B cell (primary cell): ENCODE measurements at regions of chr4 and their contacts with region 1.

Region 1: GRCh38 chr4:73069338-73070073 is at the start of gene COX18:
- DNase-seq: peak; percentile 99
- ATAC-seq: peak; percentile 80
- H3K4me3 ChIP-seq: peak within 1 kb of the TSS; percentile 72 to 90 (median 78)
- H3K4me3 Mint-ChIP-seq: peak within 1 kb of the TSS; percentile 96
- H3K27ac ChIP-seq: peak within 1 kb of the TSS; percentile 98
- H3K27ac Mint-ChIP-seq: peak within 1 kb of the TSS; percentile 97
- H3K4me1 ChIP-seq: peaks cover 17 to 26% of the 10 kb centered on the region in 2 donors
- H3K4me1 Mint-ChIP-seq: peaks cover 30% of the 10 kb centered on the region
- H3K27me3 ChIP-seq: no peaks in the 10 kb centered on the region
- H3K27me3 Mint-ChIP-seq: no peaks in the 10 kb centered on the region
- CTCF ChIP-seq: no peak
- total RNA-seq, gene COX18: 12.7 and 14.4 TPM in 2 replicates

Region 2: GRCh38 chr4:72326692-72327632 is 742.5 kb before region 1 on chr4:
- CTCF ChIA-PET with region 1: no interaction called
- POLR2A ChIA-PET with region 1: no interaction called
- intact Hi-C with region 1: no loop called
- DNase-seq: peak; percentile 10
- ATAC-seq: no peak
- H3K4me3 ChIP-seq: no peak overlapping the region
- H3K4me3 Mint-ChIP-seq: no peak overlapping the region
- H3K27ac ChIP-seq: no peak overlapping the region
- H3K27ac Mint-ChIP-seq: no peak overlapping the region
- H3K4me1 ChIP-seq: no peaks in the 10 kb centered on the region
- H3K4me1 Mint-ChIP-seq: no peaks in the 10 kb centered on the region
- H3K27me3 ChIP-seq: no peaks in the 10 kb centered on the region
- H3K27me3 Mint-ChIP-seq: peaks cover 4% of the 10 kb centered on the region
- CTCF ChIP-seq: peak; percentile 65

Region 3: DNA sequence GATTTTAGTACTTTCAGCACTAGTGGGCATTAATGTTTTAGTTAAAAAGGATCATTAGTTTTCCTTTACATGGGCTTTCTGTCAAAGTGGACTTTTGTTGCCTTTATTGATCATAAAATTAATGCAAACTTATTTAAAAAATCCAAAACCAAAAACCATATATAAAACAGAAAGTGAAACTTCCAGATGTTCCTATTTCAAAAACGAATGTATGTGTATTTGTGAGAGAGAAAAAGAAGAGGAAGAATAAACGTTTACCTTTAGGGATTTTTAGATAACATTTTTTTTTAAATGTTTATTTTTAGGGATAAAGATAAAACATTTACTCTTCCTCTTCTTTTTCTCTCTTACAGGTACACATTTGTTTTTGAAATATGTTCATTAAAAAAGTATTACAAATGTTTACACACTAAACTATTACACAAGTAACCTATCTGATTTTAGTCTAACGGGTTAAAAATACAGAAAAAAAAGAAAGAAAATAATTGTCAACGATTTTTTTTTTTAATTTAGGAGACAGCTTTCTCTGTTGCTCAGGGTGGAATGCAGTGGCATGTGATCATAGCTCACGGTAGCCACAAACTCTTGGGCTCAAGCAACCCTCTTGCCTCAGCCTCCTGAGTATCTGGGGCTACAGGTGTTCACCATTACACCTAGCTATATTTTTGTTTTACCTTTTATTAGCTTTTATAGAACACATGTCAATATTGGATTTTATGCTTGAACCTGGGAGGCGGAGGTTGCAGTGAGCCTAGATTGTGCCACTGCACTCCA is 16.8 kb after region 1 on chr4:
- CTCF ChIA-PET with region 1: no interaction called
- POLR2A ChIA-PET with region 1: interaction called, 4 read pairs
- intact Hi-C with region 1: loop called (anchors 1 kb)
- DNase-seq: peak; percentile 38
- ATAC-seq: no peak
- H3K4me3 ChIP-seq: peak overlapping the region in 2 of 5 experiments; percentile 4 to 34
- H3K4me3 Mint-ChIP-seq: peak overlapping the region; percentile 44
- H3K27ac ChIP-seq: peak overlapping the region in 1 of 2 donors; percentile 48
- H3K27ac Mint-ChIP-seq: no peak overlapping the region
- H3K4me1 ChIP-seq: peaks cover 3 to 7% of the 10 kb centered on the region in 2 donors
- H3K4me1 Mint-ChIP-seq: peaks cover 9% of the 10 kb centered on the region
- H3K27me3 ChIP-seq: no peaks in the 10 kb centered on the region
- H3K27me3 Mint-ChIP-seq: no peaks in the 10 kb centered on the region
- CTCF ChIP-seq: no peak

Region 4: GRCh38 chr4:73193155-73193554 is 123.6 kb after region 1 on chr4:
- CTCF ChIA-PET with region 1: no interaction called
- POLR2A ChIA-PET with region 1: no interaction called
- intact Hi-C with region 1: loop called (anchors 5 kb)
- DNase-seq: peak; percentile 47
- ATAC-seq: peak; percentile 56
- H3K4me3 ChIP-seq: no peak overlapping the region
- H3K4me3 Mint-ChIP-seq: peak overlapping the region; percentile 44
- H3K27ac ChIP-seq: peak overlapping the region; percentile 47 to 55
- H3K27ac Mint-ChIP-seq: peak overlapping the region; percentile 71
- H3K4me1 ChIP-seq: peaks cover 6 to 14% of the 10 kb centered on the region in 2 donors
- H3K4me1 Mint-ChIP-seq: peaks cover 18% of the 10 kb centered on the region
- H3K27me3 ChIP-seq: no peaks in the 10 kb centered on the region
- H3K27me3 Mint-ChIP-seq: no peaks in the 10 kb centered on the region
- CTCF ChIP-seq: no peak

Region 5: DNA sequence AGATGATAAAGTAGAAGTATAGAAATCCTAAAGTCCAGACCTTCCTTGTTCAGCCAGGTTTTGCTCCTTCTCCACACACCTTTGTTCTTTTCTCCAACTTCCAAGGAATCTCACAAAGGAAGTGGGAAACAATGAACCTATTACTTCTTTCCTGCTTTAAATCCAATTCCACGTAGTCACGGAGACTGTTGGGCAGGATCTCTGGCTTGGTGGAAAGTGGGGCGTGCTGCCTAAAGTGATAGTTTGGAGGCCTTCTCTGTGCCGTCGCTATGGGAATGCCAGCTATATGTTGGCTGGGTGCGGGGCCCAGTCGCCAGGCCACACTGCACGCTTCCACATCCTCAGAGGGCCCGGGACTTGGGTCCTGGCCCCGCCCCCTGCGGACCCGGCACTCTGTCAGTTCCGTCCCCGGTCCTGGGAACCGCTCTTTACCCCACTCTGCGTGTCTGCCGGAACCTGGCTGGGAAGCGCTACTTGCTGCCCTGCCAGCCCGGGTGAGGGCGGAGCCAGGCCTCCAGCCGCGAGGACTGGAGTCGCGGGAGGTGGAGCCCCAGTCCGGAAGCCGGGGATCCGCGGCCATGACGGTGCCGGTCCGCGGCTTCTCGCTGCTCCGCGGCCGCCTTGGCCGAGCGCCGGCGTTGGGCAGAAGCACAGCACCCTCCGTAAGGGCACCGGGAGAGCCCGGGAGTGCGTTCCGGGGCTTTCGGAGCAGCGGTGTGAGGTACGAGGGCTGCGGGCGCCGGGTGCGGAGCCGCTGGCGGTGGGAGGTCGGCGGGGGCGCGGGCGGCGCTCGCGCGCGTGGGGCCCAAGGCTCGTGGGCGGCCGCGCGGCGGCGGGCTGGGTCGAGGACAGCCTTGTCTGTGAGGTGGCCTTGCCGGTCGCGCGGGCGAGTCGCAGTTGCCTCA is 1088.3 kb after region 1 on chr4 and contains the start of gene MTHFD2L:
- CTCF ChIA-PET with region 1: no interaction called
- POLR2A ChIA-PET with region 1: no interaction called
- intact Hi-C with region 1: loop called (anchors 2 kb)
- DNase-seq: peak; percentile 87
- ATAC-seq: peak; percentile 97
- H3K4me3 ChIP-seq: peak within 1 kb of the TSS; percentile 66 to 84 (median 71)
- H3K4me3 Mint-ChIP-seq: peak within 1 kb of the TSS; percentile 97
- H3K27ac ChIP-seq: peak within 1 kb of the TSS; percentile 67 to 75
- H3K27ac Mint-ChIP-seq: peak within 1 kb of the TSS; percentile 92
- H3K4me1 ChIP-seq: peaks cover 11 to 13% of the 10 kb centered on the region in 2 donors
- H3K4me1 Mint-ChIP-seq: peaks cover 21% of the 10 kb centered on the region
- H3K27me3 ChIP-seq: peaks cover 0 to 9% (median 1%) of the 10 kb centered on the region in 4 experiments
- H3K27me3 Mint-ChIP-seq: peaks cover 11% of the 10 kb centered on the region
- CTCF ChIP-seq: no peak
- total RNA-seq, gene MTHFD2L: 12.6 and 13.3 TPM in 2 replicates